ENCODE measurements at regions of chr2 and their contacts with region 1.

Region 1: DNA sequence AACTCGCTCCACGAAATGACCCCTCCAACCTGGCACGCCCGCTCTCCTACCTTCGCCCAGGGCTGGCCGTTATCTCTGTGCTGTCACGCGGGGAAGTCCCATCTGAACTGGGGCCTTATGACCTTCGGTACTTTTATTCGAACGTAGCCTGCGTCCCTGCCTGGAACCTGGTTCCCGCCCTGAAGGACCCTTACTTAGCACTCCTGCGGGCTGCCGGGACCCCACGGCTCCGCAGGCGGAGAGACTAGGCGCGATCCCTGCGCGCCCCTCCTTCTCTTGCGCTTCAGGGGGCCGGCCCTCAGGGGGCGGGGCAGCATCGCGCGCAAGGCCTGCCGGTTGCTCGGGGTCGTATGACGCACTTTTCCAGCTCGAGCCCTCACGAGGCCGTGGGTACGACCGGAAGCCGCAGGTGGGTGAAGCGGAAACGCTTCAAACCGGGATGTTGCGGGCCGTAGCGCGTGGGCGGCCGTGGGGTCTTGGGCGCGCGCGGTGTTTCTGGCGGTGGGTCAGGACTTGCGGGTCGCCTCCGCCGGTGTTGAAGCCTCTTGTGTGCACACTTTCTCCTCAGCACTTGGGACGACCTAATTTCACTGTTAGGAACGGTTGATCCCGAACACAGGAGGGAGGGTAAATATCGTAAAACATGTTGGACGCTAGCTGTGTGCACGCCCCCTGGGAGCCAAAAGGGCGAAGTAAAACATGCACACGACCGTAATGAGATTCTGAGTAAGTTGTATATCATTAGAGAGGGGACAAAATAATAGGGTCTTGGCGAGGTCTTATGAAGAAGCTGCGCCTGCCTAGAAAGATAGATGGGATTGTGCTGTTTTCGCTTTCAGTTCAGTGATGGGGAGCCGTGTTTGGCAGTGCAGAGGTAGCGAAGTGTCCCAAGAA is at the starts of genes LIPT1 and TSGA10:
- DNase-seq: peak; percentile 88
- H3K4me3 Mint-ChIP-seq: peak within 1 kb of the TSS; percentile 95
- H3K27ac Mint-ChIP-seq: peak within 1 kb of the TSS; percentile 89
- H3K4me1 Mint-ChIP-seq: peaks cover 25% of the 10 kb centered on the region
- H3K27me3 Mint-ChIP-seq: no peaks in the 10 kb centered on the region
- total RNA-seq, gene LIPT1: 3.4 and 3.5 TPM in 2 replicates
- total RNA-seq, gene TSGA10: 3.3 and 3.4 TPM in 2 replicates

Region 2: DNA sequence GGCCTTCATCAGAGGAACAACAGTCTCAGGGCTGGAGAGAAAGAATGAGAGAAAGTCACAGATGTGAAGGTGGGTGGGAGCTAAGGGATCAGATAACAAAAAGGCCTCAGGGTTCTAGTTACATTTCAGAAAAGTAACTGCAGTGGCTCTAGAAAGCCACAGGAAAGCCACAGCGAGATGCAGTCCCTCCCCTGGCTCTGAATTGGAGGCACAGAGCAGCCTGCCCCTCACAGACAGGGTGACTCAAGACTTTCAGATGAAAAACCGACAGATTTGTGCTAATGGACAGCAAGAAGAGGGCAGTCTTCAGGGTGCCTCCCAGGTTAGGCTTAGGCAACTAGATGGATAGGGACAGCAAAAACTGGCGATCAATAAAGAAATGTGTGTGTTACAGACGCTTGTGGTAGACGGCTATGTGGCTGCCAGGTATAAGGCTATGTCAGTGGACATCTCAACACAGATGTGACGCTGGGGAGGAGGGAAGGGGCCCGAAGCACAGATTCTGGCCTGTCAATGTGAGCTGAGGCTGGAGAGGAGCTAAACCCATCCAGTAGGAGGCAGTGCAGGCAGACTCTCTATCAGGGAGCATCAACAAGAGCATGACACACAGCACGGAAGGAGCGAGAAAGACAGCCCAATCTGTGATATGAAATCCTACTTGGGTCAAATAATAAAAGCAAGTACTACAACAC is 520.3 kb before region 1 on chr2:
- intact Hi-C with region 1: loop called (anchors 10 kb)
- DNase-seq: peak; percentile 42
- H3K4me3 Mint-ChIP-seq: peak overlapping the region; percentile 63
- H3K27ac Mint-ChIP-seq: peak overlapping the region; percentile 91
- H3K4me1 Mint-ChIP-seq: peaks cover 45% of the 10 kb centered on the region
- H3K27me3 Mint-ChIP-seq: no peaks in the 10 kb centered on the region

Region 3: DNA sequence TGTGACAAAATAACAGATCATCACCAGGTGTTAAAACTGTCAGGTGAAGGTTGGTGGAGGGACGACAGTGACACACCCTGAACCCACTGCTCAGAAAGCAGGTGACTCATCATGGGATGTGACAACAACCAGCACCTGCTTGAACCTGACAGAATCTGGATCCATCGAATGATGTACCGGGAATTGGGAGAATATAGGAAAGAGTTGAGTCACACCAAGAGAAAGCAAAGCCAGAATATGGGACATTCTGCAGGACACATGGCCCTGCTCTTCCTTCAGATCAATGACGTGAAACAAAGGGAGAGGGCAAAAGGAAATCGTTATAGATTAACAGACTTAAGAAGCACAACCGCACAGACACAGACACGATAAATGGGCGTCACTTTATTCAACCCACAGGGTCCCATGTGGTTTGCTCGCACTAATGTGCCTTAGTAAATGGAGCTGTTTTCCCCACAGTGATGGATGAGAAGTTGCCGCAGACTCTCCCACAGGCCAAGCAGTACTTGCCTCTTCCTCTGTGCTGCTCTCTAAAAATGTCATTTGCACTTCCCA is 319.0 kb before region 1 on chr2:
- intact Hi-C with region 1: loop called (anchors 10 kb)
- DNase-seq: peak; percentile 33
- H3K4me3 Mint-ChIP-seq: peak overlapping the region; percentile 24
- H3K27ac Mint-ChIP-seq: peak overlapping the region; percentile 79
- H3K4me1 Mint-ChIP-seq: peaks cover 40% of the 10 kb centered on the region
- H3K27me3 Mint-ChIP-seq: peaks cover 11% of the 10 kb centered on the region

Region 4: GRCh38 chr2:99180755-99181623 is 26.1 kb after region 1 on chr2 and contains the starts of genes MITD1 and MRPL30:
- intact Hi-C with region 1: loop called (anchors 1 kb)
- DNase-seq: peak; percentile 88
- H3K4me3 Mint-ChIP-seq: peak within 1 kb of the TSS; percentile 96
- H3K27ac Mint-ChIP-seq: peak within 1 kb of the TSS; percentile 91
- H3K4me1 Mint-ChIP-seq: peaks cover 34% of the 10 kb centered on the region
- H3K27me3 Mint-ChIP-seq: no peaks in the 10 kb centered on the region
- total RNA-seq, gene MITD1: 49.7 and 52.4 TPM in 2 replicates
- total RNA-seq, gene MRPL30: 27.6 and 29.4 TPM in 2 replicates

Region 5: GRCh38 chr2:99489761-99490622 is 335.1 kb after region 1 on chr2 and contains the start of gene REV1:
- intact Hi-C with region 1: loop called (anchors 10 kb)
- DNase-seq: peak; percentile 89
- H3K4me3 Mint-ChIP-seq: peak within 1 kb of the TSS; percentile 100
- H3K27ac Mint-ChIP-seq: peak within 1 kb of the TSS; percentile 97
- H3K4me1 Mint-ChIP-seq: peaks cover 31% of the 10 kb centered on the region
- H3K27me3 Mint-ChIP-seq: peaks cover 2% of the 10 kb centered on the region
- total RNA-seq, gene REV1: 39.4 and 41.3 TPM in 2 replicates

Region 6: DNA sequence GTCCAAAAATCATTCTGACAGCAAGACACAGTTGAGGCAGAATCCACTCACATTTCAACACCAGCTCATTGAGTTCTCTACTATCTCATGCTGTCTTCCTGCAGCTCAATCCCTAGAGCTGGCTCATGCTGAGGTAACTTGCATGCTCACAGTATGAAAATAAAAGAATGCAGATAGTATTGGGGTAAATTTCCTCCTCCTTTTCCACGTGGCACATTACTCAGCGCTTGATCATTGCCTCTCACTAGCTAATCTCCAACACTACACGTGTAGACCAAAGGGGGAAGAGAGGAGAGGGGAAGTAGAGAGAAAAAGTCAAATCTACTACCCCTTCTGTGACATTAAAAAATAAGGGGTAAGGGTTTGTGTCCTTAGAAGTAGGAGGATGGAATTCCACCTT is 686.9 kb after region 1 on chr2:
- intact Hi-C with region 1: no loop called
- DNase-seq: no peak
- H3K4me3 Mint-ChIP-seq: no peak overlapping the region
- H3K27ac Mint-ChIP-seq: no peak overlapping the region
- H3K4me1 Mint-ChIP-seq: peaks cover 4% of the 10 kb centered on the region
- H3K27me3 Mint-ChIP-seq: peaks cover 10% of the 10 kb centered on the region

Measured in activated T-helper 2 cell treated with anti-CD3 and anti-CD28 coated beads, Interferon-gamma antibody, Interleukin-2, Interleukin-4, amounts not matched to agents 10 μg/mL and 5 μg/mL and 100 μg/mL, durations not matched to agents 14 hours and 24 hours and 36 hours (primary cell).